Sigmoid colon (tissue), 7 donors: ENCODE measurements at regions of chr14 and their contacts with region 1.

Region 1: DNA sequence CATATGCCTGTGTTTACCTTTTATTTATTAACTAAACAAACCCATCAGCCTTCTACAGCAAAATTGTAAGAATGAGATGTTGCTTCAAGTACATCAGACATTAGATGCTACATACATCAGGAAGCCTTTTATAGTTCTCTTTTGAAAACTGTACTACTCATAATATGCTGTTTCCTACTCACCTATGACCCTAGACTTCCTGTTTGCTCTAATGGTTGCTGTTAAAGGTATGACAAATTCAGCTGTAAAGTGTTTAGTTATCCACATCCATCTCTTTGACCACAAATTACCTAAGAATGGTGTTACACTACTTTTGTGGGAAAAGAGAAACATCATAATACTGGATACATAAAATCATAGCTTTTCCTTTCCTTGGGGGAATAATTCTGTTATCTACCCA is 220.0 kb downstream of the RAD51B start:
- DNase-seq: no peak
- H3K4me3 ChIP-seq: no peak overlapping the region
- H3K27ac ChIP-seq: peak overlapping the region; percentile 22 to 90 (median 85)
- H3K4me1 ChIP-seq: peaks cover 0 to 92% (median 61%) of the 10 kb centered on the region in 4 donors
- H3K27me3 ChIP-seq: no peaks in the 10 kb centered on the region
- CTCF ChIP-seq: no peak
- EP300 ChIP-seq: no peak
- POLR2A ChIP-seq: no peak

Region 2: GRCh38 chr14:68094752-68095151 is 55.2 kb after region 1 on chr14:
- intact Hi-C with region 1: no loop called
- DNase-seq: no peak
- H3K4me3 ChIP-seq: no peak overlapping the region
- H3K27ac ChIP-seq: peak overlapping the region in 3 of 4 donors; percentile 51 to 88 (median 79)
- H3K4me1 ChIP-seq: peaks cover 0 to 45% (median 31%) of the 10 kb centered on the region in 4 donors
- H3K27me3 ChIP-seq: no peaks in the 10 kb centered on the region
- CTCF ChIP-seq: no peak
- EP300 ChIP-seq: no peak
- POLR2A ChIP-seq: no peak

Region 3: DNA sequence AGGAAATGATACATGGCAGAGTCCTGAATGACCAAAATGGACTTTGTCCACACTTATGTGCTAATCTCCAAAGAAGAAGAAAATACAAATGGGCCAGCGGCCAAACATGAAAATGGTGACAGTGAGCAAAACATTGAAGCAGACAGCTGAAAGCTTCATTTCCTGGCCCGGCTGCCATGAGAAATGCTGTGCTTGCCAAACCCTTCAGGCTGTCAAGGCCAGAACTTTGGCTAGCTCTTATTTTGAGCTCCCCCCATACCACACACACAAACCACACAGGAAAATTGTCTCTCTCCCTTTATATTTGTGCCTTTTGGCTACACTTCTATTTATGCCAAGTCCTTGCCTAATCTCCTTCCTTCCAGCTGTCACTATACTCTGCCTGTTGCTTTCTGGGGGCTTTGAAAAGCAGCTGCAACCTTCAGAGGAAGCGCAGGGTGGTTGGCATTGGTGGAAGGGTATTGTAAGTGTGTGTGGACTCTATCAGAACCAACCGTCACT is 103.8 kb after region 1 on chr14:
- intact Hi-C with region 1: loop called (anchors 2 kb)
- DNase-seq: peak; percentile 93
- H3K4me3 ChIP-seq: no peak overlapping the region
- H3K27ac ChIP-seq: peak overlapping the region; percentile 86 to 92 (median 88)
- H3K4me1 ChIP-seq: peaks cover 0 to 97% (median 84%) of the 10 kb centered on the region in 4 donors
- H3K27me3 ChIP-seq: no peaks in the 10 kb centered on the region
- CTCF ChIP-seq: no peak
- EP300 ChIP-seq: peak in 1 of 4 donors; percentile 20
- POLR2A ChIP-seq: no peak

Region 4: GRCh38 chr14:68210729-68211299 is 171.2 kb after region 1 on chr14:
- intact Hi-C with region 1: no loop called
- DNase-seq: no peak
- H3K4me3 ChIP-seq: peak overlapping the region in 2 of 4 donors; percentile 10 to 16
- H3K27ac ChIP-seq: peak overlapping the region; percentile 63 to 77 (median 67)
- H3K4me1 ChIP-seq: peaks cover 0 to 68% (median 37%) of the 10 kb centered on the region in 4 donors
- H3K27me3 ChIP-seq: no peaks in the 10 kb centered on the region
- CTCF ChIP-seq: no peak
- EP300 ChIP-seq: no peak
- POLR2A ChIP-seq: no peak